ENCODE measurements at regions of chr15 and their contacts with region 1.

Region 1: DNA sequence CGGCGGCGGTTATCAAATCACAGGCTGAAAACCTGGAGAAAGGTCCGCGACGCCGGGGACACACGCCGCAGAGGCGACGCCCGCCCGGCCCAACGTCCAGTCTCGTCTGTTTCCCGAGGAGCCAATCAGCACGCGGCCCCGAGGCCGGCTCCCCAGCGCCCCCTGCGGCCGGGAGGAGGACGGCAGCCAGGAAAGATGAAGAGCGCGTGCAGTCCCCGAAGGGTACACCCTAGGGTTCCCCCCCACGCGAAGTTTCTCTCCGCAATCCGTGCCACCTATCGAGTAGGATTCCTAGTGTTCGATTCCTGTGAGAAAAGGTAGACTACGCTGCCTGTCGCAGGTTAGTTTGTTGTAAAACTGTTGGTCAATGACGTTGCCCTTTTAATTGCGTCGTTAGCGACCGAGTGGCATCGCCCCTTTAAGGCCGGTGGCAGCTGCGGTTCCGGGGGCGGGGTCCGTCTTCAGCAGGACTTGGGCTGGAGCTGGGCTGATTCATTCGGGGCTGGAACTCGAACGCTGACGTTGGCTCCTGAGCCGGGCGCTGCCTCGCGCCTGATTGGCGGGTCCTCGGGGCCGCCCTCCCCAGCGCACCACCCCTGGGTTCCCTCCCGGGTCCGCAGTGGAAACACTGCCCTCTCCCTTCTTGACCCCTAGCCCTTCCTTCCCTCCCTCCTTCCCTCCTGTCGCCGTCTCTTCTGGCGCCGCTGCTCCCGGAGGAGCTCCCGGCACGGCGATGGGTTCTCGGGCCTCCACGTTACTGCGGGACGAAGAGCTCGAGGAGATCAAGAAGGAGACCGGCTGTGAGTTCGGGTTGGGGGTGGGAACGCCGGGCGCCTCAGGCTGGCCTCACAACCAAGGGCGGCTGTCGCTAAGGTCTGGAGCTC is at the starts of genes CHP1 and EXD1:
- DNase-seq: peak; percentile 96
- H3K4me3 ChIP-seq: peak within 1 kb of the TSS; percentile 86
- H3K27ac ChIP-seq: peak within 1 kb of the TSS; percentile 47
- H3K4me1 ChIP-seq: peaks cover 16% of the 10 kb centered on the region
- CTCF ChIP-seq: peak; percentile 95
- total RNA-seq, gene CHP1: 19.4 and 32.4 TPM in 2 replicates
- total RNA-seq, gene EXD1: not detected in 2 replicates

Region 2: GRCh38 chr15:40914486-40914885 is 316.4 kb before region 1 on chr15:
- CTCF ChIA-PET with region 1: no interaction called
- POLR2A ChIA-PET with region 1: no interaction called
- intact Hi-C with region 1: no loop called
- DNase-seq: peak; percentile 41
- H3K4me3 ChIP-seq: no peak overlapping the region
- H3K27ac ChIP-seq: no peak overlapping the region
- H3K4me1 ChIP-seq: peaks cover 8% of the 10 kb centered on the region
- CTCF ChIP-seq: peak; percentile 77

Region 3: DNA sequence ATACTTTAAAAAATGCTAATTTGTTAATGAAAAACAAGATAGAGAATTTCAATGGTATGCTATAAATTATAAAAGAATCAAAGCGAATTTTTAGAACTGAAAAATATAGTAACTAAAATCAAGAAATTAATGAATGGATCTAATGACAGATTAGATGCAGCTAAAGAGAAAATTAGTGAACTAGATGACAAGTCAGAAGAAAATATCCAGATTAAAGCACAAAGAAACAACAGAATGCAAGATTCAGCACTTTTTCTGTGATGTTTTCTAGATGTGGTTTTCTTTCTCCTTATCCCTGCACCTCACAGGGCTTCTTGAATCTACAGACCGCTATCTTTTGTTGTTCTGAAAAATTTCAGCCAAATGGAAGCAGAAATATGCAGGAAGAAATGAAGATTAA is 169.2 kb before region 1 on chr15:
- CTCF ChIA-PET with region 1: no interaction called
- POLR2A ChIA-PET with region 1: no interaction called
- intact Hi-C with region 1: no loop called
- DNase-seq: no peak
- H3K4me3 ChIP-seq: no peak overlapping the region
- H3K27ac ChIP-seq: no peak overlapping the region
- H3K4me1 ChIP-seq: no peaks in the 10 kb centered on the region
- CTCF ChIP-seq: no peak

Region 4: DNA sequence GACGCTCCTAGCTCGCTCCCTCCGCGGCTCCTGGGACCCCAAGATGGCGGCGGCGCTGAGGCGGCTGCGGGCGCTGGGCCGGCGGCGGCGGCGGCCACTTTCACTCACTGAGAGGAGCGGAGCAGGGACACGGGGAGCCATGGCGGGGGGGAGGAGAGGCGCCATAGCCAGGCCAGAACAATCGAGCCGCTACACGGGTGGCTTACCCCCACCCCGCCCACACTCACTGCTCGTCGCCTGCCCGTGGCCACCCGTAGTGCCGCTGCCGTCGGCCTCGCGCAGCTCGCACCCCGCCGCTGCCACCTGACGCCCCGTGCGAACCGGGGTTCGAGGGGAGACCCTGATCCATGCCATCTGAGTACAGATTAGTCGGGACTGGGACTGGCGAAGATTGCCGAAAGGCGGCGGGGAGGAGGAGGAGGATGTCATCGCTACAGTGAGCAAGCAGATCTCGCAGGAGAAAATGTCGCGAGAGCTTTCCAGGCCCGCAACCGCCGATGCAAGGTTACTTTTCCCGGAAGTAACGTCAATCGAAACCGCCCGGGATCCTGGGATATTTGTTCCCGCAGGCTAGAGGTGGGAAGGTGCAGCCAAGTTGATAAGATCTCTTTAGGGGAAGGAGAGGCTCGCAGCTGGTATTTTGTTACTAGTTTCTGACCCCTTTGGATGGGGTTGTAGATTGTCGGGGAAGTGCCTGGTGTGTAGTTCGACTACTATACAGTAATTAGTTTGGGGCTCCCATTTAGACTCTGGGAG is 114.6 kb before region 1 on chr15 and contains the start of gene INO80:
- CTCF ChIA-PET with region 1: no interaction called
- POLR2A ChIA-PET with region 1: no interaction called
- intact Hi-C with region 1: loop called (anchors 2 kb)
- DNase-seq: peak; percentile 98
- H3K4me3 ChIP-seq: peak within 1 kb of the TSS; percentile 77
- H3K27ac ChIP-seq: peak within 1 kb of the TSS; percentile 74
- H3K4me1 ChIP-seq: peaks cover 13% of the 10 kb centered on the region
- CTCF ChIP-seq: no peak
- total RNA-seq, gene INO80: 31.7 and 47.1 TPM in 2 replicates

Region 5: DNA sequence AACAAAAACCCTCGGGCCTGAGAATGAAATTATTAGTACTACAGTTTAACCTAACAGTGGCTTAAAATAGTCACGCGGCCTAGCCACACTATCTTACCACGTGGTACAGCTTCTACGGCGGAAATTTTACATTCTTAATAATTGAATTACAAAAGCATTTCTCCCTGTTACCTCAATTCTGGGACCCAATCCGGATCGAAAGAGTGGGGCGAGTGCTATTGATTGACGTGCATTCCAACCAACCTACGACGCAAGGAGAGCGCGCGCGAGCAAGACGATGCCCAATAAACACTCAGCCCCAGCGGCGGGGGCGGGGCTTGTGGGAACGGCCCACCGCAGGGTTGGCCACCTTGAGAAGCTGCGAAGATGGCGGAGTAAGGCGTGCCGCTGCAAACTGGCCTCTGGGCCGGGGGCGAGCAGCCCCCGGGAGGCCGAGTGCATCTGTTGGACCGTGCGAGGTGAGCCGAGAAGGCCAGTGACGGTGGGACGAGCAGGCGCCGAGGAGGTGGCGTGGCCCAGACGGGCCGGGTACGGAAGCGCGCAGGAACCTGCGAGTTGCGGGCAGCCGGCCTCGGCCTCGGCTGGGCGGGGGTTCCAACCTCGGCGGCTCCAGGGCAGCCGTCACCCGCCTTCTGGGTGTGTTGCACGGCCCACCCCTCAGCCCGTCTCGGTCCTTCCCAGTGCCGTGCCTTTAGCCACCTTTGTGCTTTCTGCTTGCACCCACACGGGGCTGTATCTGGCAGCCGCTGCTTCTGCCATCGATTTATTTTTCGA is 52.9 kb after region 1 on chr15:
- CTCF ChIA-PET with region 1: no interaction called
- POLR2A ChIA-PET with region 1: no interaction called
- intact Hi-C with region 1: loop called (anchors 5 kb)
- DNase-seq: peak; percentile 100
- H3K4me3 ChIP-seq: peak overlapping the region; percentile 98
- H3K27ac ChIP-seq: peak overlapping the region; percentile 93
- H3K4me1 ChIP-seq: peaks cover 39% of the 10 kb centered on the region
- CTCF ChIP-seq: no peak

Measured in OCI-LY7 (cell line).